Dorsolateral prefrontal cortex (tissue), 120 donors: ENCODE measurements at regions of chr22 and their contacts with region 1.

Region 1: DNA sequence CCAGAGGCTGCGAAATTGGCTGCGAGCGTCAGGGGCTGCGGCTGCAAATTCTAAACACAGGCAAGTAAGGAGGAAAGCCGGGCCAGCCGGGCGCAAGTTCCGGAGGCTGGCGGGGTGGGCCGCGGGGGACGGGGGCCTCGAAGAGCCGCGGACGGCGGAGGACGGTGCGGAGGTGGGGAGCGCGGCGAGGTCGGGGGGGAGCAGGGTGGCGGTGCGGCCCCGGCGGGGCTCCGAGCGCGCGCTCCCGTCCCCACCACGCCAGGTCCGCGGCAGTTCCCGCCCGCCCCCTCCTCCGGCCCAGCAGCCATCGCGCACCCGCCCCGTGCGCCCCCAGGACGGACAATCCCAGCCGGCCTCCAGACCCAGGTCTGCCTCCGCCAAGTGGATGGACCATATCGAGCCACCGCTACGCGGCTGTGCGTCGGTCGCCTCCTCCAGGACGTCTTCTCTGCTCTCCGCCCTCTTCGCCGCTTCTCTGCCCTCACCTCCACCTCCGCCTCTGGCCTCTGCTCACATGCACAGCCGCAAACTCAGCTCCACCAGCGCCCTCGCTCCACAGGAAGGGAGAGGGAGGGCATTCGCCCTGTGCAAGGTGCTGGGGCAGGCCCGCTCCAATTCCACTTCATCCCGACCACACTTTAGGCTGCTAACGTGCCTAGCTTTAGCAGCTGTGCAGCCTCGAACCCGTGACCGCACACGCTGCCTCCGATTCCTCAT is 7.2 kb downstream of the ELFN2 start:
- DNase-seq: no peak
- H3K4me3 ChIP-seq: peak overlapping the region in 58 of 59 donors; percentile 5 to 65 (median 48)
- H3K27ac ChIP-seq: peak overlapping the region in 32 of 59 donors; percentile 11 to 76 (median 42)
- H3K27me3 ChIP-seq: peaks cover 0 to 50% (median 10%) of the 10 kb centered on the region in 45 donors
- CTCF ChIP-seq: no peak

Region 2: GRCh38 chr22:37340331-37341262 is 79.5 kb before region 1 on chr22:
- intact Hi-C with region 1: loop called in 1 of 2 experiments (anchors 5 kb)
- DNase-seq: peak; percentile 27 to 87 (median 74)
- H3K4me3 ChIP-seq: no peak overlapping the region
- H3K27ac ChIP-seq: peak overlapping the region in 18 of 59 donors; percentile 10 to 77 (median 42)
- H3K27me3 ChIP-seq: peaks cover 0 to 5% (median 0%) of the 10 kb centered on the region in 45 donors
- CTCF ChIP-seq: no peak

Region 3: DNA sequence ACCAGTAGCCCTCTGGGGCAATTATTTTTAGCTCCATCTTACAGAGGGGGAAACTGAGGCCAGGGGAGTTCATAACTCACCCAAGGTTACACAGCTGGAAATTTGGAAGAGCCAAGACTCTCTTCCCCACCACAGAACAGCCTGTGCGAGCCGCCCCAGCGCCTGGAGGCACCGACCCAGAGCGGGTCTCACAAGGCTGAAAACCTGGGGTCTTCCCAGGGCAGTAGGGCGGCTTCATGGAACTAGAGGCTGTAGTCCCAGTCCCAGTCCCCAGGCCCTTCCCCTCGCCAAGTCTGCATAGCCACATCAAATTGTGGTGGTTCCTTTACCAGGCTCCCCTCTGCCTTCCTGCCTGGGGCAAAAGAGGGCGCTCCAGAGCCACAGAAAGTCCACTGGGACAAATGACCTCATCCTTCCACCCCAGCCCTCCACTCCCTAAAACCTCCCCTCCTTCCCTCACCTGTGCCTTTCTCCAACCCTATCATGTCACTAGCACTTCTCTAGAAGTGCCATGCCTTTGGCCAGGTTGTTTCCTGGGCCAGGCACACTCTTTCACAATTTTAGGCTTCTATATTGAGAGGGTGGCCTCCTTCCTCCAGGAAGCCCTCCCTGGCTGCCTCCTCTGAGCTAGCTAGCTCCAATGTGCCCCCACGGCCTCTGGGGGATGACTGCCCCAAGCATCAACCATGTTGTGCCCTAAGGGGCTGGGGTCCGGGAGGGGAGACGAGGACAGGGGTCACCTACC is 125.0 kb after region 1 on chr22:
- intact Hi-C with region 1: no loop called
- DNase-seq: peak in 4 of 10 donors; percentile 49 to 73 (median 62)
- H3K4me3 ChIP-seq: peak overlapping the region in 10 of 59 donors; percentile 3 to 26 (median 16)
- H3K27ac ChIP-seq: peak overlapping the region; percentile 60 to 98 (median 95)
- H3K27me3 ChIP-seq: peaks cover 0 to 6% (median 0%) of the 10 kb centered on the region in 45 donors
- CTCF ChIP-seq: peak; percentile 12 to 79 (median 62)